ENCODE measurements at regions of chr4 and their contacts with region 1.

Region 1: GRCh38 chr4:26235500-26235899 is 85.3 kb upstream of the RBPJ start:
- DNase-seq: peak in 3 of 10 donors; percentile 39 to 49 (median 43)
- H3K4me3 ChIP-seq: no peak overlapping the region
- H3K27ac ChIP-seq: peak overlapping the region in 50 of 59 donors; percentile 2 to 99 (median 82)
- H3K27me3 ChIP-seq: peaks cover 0 to 3% (median 0%) of the 10 kb centered on the region in 45 donors
- CTCF ChIP-seq: peak in 27 of 56 donors; percentile 8 to 63 (median 31)

Region 2: GRCh38 chr4:25981749-25982148 is 253.8 kb before region 1 on chr4:
- intact Hi-C with region 1: loop called in 1 of 2 experiments (anchors 10 kb)
- DNase-seq: no peak
- H3K4me3 ChIP-seq: no peak overlapping the region
- H3K27ac ChIP-seq: no peak overlapping the region
- H3K27me3 ChIP-seq: no peaks in the 10 kb centered on the region
- CTCF ChIP-seq: no peak

Region 3: GRCh38 chr4:26088433-26088928 is 147.0 kb before region 1 on chr4:
- intact Hi-C with region 1: loop called in 1 of 2 experiments (anchors 5 kb)
- DNase-seq: no peak
- H3K4me3 ChIP-seq: no peak overlapping the region
- H3K27ac ChIP-seq: no peak overlapping the region
- H3K27me3 ChIP-seq: peaks cover 0 to 2% (median 0%) of the 10 kb centered on the region in 45 donors
- CTCF ChIP-seq: no peak

Region 4: DNA sequence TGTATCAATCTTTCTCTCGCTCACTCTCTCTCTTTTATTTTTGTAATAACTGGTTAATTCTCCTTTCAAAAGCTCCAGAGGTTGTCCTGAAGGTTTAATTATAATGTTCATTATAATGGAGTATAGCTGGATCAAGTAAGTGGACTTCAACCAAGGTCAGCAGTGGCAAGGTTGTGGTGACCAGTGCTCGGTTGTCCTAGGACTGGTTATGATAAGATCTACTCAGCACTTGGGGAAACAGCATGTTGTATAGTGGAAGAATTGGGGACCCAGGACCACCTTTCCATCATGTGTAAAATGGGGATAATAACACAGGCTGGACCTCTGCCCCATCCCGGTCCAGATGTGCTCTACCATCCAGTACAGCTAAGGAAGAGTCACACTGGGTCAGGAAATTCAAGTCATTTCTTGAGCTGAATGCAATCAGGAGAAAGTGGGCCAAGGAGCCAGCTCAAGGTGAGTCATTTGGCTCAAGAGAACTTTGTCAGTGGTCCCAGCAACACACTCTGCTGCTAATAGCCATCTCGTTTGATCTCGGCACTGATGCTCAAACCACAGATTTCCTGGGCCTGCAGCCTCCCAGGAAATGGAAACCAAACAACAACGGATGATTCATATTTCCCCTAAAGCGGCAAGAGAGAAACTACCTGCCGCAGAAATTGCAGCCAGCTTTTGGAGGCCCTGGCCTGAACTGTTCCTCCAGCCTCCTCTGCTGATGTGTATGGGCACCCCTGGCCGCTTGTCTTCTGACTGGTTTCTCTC is 38.3 kb before region 1 on chr4:
- intact Hi-C with region 1: loop called in 1 of 2 experiments (anchors 5 kb)
- DNase-seq: no peak
- H3K4me3 ChIP-seq: no peak overlapping the region
- H3K27ac ChIP-seq: no peak overlapping the region
- H3K27me3 ChIP-seq: peaks cover 0 to 4% (median 0%) of the 10 kb centered on the region in 45 donors
- CTCF ChIP-seq: no peak

Region 5: GRCh38 chr4:26206339-26206738 is 29.2 kb before region 1 on chr4:
- intact Hi-C with region 1: loop called in 1 of 2 experiments (anchors 2 kb)
- DNase-seq: no peak
- H3K4me3 ChIP-seq: no peak overlapping the region
- H3K27ac ChIP-seq: peak overlapping the region in 54 of 59 donors; percentile 11 to 100 (median 96)
- H3K27me3 ChIP-seq: peaks cover 0 to 11% (median 0%) of the 10 kb centered on the region in 45 donors
- CTCF ChIP-seq: no peak

Region 6: GRCh38 chr4:26257850-26258249 is 22.4 kb after region 1 on chr4:
- intact Hi-C with region 1: no loop called
- DNase-seq: no peak
- H3K4me3 ChIP-seq: no peak overlapping the region
- H3K27ac ChIP-seq: no peak overlapping the region
- H3K27me3 ChIP-seq: no peaks in the 10 kb centered on the region
- CTCF ChIP-seq: no peak

Region 7: GRCh38 chr4:26404743-26405206 is 169.3 kb after region 1 on chr4:
- intact Hi-C with region 1: loop called in 1 of 2 experiments (anchors 10 kb)
- DNase-seq: no peak
- H3K4me3 ChIP-seq: no peak overlapping the region
- H3K27ac ChIP-seq: peak overlapping the region in 7 of 59 donors; percentile 29 to 57 (median 47)
- H3K27me3 ChIP-seq: no peaks in the 10 kb centered on the region
- CTCF ChIP-seq: peak in 7 of 56 donors; percentile 8 to 29 (median 16)